GM12878 (cell line): ENCODE measurements at regions of chrX and their contacts with region 1.

Region 1: DNA sequence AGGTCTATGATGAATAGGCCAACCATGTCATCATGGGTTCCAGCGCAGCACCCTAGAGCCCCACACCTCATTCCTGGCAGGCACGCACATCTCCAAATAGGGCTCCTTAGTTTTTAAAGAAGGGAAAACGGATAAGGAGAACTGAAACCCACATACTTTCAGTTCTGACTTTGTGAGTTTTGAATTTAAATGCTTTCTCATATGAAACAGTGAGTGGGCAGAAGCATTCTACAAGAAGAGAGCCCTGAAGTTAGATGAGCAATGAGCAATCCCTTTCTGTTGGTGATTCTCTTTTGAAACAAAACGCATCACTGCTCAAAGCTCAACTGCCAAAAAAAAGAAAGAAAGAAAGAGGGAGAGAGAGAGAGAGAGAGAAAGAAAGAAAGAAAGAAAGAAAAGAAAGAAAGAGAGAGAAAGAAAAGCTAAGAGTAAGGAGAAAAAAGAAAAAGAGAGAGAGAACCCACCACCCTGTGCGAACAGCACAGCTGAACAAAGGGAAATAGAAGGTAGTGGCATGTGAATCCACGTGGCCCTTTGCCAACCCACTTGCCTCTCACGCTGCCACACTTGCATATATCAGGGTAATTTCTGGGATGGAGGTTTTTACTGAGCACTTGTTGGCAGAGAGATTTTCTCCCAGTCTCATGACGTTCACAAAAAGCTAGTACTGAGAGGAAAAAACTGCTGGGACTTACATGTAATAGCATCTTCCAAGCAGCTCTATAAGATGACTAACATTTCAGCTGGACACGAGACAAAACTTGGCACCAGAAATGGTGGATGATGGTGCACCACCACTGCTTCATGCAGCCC is 31.0 kb downstream of the TMSB4X start:
- DNase-seq: peak; percentile 89
- ATAC-seq: peak; percentile 55
- H3K4me3 ChIP-seq: peak overlapping the region; percentile 28; the same call in 1 of the 2 replicates
- H3K27ac ChIP-seq: peak overlapping the region; percentile 91
- H3K4me1 ChIP-seq: peaks cover 83% of the 10 kb centered on the region
- H3K27me3 ChIP-seq: no peaks in the 10 kb centered on the region
- CTCF ChIP-seq: no peak
- EP300 ChIP-seq: peak; percentile 96
- POLR2A ChIP-seq: no peak
- RAD21 ChIP-seq: no peak; the same call in 1 of the 2 replicates

Region 2: DNA sequence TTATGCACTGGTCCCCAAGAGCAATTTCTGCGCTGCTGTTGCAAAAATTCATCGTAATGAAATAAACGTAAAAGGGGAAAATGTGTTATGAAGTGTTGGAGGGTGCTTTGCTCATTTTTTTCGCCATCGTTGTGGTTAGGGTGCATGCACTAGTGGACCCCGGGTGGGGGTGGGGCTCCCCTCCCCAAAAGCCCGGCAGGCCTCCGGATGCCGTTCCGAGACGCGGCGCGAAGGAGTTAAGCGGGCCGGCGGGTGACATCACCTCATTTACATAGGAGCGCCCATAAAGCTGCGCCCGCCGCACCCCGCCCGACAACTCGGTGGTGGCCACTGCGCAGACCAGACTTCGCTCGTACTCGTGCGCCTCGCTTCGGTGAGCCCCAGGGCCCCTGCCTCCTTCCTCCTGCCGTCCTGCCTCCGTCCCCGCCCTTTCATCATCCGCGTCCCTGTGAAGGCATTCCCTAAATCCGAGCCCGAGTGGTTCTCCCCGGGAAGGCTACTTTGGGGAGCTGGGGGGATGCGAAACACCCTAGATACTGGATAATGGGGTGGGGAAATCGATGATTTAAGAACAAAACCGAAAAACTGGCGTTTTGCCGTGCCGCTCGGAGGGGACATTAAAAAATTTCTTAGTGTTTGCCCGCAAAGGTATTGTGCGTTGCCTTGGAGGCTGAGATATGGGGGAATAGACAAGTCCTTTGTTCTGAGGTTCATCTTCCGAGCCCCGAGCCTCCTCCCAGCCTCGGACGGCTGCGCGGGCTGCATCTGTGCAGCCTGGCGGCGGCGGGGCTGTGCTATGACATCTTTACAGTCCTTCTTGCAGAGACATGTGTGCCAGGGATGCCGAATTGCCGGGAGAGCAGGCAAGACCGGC is 30.8 kb before region 1 on chrX and contains the start of gene TMSB4X:
- CTCF ChIA-PET with region 1: interaction called, 7 read pairs
- POLR2A ChIA-PET with region 1: interaction called, 157 read pairs
- RAD21 ChIA-PET with region 1: interaction called, 525 read pairs
- SMC1A ChIA-PET with region 1: interaction called, 595 read pairs
- in situ Hi-C with region 1: no loop called
- intact Hi-C with region 1: loop called (anchors 1 kb)
- DNase-seq: no peak
- ATAC-seq: peak; percentile 35
- H3K4me3 ChIP-seq: peak within 1 kb of the TSS; percentile 81
- H3K27ac ChIP-seq: peak within 1 kb of the TSS; percentile 90
- H3K4me1 ChIP-seq: peaks cover 6% of the 10 kb centered on the region; the same call in 1 of the 2 replicates
- H3K27me3 ChIP-seq: no peaks in the 10 kb centered on the region
- CTCF ChIP-seq: no peak
- EP300 ChIP-seq: no peak
- POLR2A ChIP-seq: peak; percentile 97
- RAD21 ChIP-seq: no peak
- polyA plus RNA-seq, gene TMSB4X: 32,576 to 35,408 TPM

Region 3: GRCh38 chrX:12994276-12994675 is 11.6 kb before region 1 on chrX:
- CTCF ChIA-PET with region 1: interaction called, 6 read pairs
- POLR2A ChIA-PET with region 1: interaction called, 157 read pairs
- RAD21 ChIA-PET with region 1: interaction called, 4 read pairs
- SMC1A ChIA-PET with region 1: interaction called, 595 read pairs
- in situ Hi-C with region 1: no loop called
- intact Hi-C with region 1: no loop called
- DNase-seq: no peak
- ATAC-seq: no peak
- H3K4me3 ChIP-seq: no peak overlapping the region
- H3K27ac ChIP-seq: no peak overlapping the region
- H3K4me1 ChIP-seq: peaks cover 20% of the 10 kb centered on the region
- H3K27me3 ChIP-seq: no peaks in the 10 kb centered on the region
- CTCF ChIP-seq: no peak
- EP300 ChIP-seq: no peak
- POLR2A ChIP-seq: no peak
- RAD21 ChIP-seq: no peak

Region 4: DNA sequence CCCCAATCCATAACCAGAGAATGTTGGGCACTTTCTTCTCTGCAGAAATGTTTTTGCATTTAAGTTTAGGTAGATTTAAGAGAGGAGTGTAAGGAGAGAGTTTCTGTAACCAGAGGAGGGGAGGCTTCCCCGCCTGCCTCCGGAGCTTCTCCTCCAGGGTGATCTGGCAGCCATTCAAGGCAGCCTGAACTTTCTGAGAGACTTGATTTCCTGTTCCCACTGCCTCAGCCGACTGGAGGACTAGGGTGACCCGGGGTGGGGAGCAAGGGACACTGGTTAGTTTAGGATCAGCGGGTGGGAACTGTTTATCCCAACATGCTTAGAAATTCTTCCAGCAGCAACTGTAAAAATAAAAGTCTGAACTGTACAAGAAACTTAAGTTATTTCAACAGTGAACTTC is 23.5 kb after region 1 on chrX:
- CTCF ChIA-PET with region 1: interaction called, 5 read pairs
- POLR2A ChIA-PET with region 1: interaction called, 25 read pairs
- RAD21 ChIA-PET with region 1: interaction called, 81 read pairs
- SMC1A ChIA-PET with region 1: interaction called, 189 read pairs
- in situ Hi-C with region 1: no loop called
- intact Hi-C with region 1: no loop called
- DNase-seq: no peak
- ATAC-seq: peak; percentile 21
- H3K4me3 ChIP-seq: no peak overlapping the region
- H3K27ac ChIP-seq: peak overlapping the region; percentile 83
- H3K4me1 ChIP-seq: peaks cover 45% of the 10 kb centered on the region
- H3K27me3 ChIP-seq: no peaks in the 10 kb centered on the region
- CTCF ChIP-seq: no peak
- EP300 ChIP-seq: no peak
- POLR2A ChIP-seq: no peak
- RAD21 ChIP-seq: no peak

Region 5: GRCh38 chrX:13167481-13168231 is 161.8 kb after region 1 on chrX:
- CTCF ChIA-PET with region 1: no interaction called
- POLR2A ChIA-PET with region 1: no interaction called
- RAD21 ChIA-PET with region 1: no interaction called
- SMC1A ChIA-PET with region 1: no interaction called
- in situ Hi-C with region 1: no loop called
- intact Hi-C with region 1: loop called (anchors 10 kb)
- DNase-seq: no peak
- ATAC-seq: peak; percentile 75
- H3K4me3 ChIP-seq: no peak overlapping the region
- H3K27ac ChIP-seq: no peak overlapping the region
- H3K4me1 ChIP-seq: peaks cover 8% of the 10 kb centered on the region
- H3K27me3 ChIP-seq: no peaks in the 10 kb centered on the region
- CTCF ChIP-seq: no peak
- EP300 ChIP-seq: no peak
- POLR2A ChIP-seq: no peak
- RAD21 ChIP-seq: no peak